Dorsolateral prefrontal cortex (tissue), 120 donors: ENCODE measurements at regions of chr1 and their contacts with region 1.

Region 1: GRCh38 chr1:109532365-109533136 is 7.1 kb upstream of the GPR61 start:
- DNase-seq: peak; percentile 80 to 90 (median 88)
- H3K4me3 ChIP-seq: peak overlapping the region in 52 of 59 donors; percentile 4 to 59 (median 34)
- H3K27ac ChIP-seq: peak overlapping the region in 56 of 59 donors; percentile 34 to 92 (median 84)
- H3K27me3 ChIP-seq: no peaks in the 10 kb centered on the region
- CTCF ChIP-seq: peak; percentile 81 to 99 (median 94)

Region 2: GRCh38 chr1:109282952-109283747 is 249.4 kb before region 1 on chr1 and contains the start of gene PSRC1:
- intact Hi-C with region 1: loop called in 1 of 2 experiments (anchors 5 kb)
- DNase-seq: peak; percentile 98 to 99 (median 99)
- H3K4me3 ChIP-seq: peak within 1 kb of the TSS; percentile 61 to 99 (median 84)
- H3K27ac ChIP-seq: peak within 1 kb of the TSS; percentile 46 to 100 (median 96)
- H3K27me3 ChIP-seq: no peaks in the 10 kb centered on the region
- CTCF ChIP-seq: peak in 53 of 56 donors; percentile 22 to 72 (median 54)
- total RNA-seq, gene PSRC1: 52.9 to 176 (median 79.2) TPM

Region 3: GRCh38 chr1:109412551-109412950 is 120.0 kb before region 1 on chr1:
- intact Hi-C with region 1: loop called in 1 of 2 experiments (anchors 5 kb)
- DNase-seq: no peak
- H3K4me3 ChIP-seq: no peak overlapping the region
- H3K27ac ChIP-seq: peak overlapping the region in 3 of 59 donors; percentile 8 to 38 (median 15)
- H3K27me3 ChIP-seq: no peaks in the 10 kb centered on the region
- CTCF ChIP-seq: no peak

Region 4: GRCh38 chr1:109426278-109427170 is 106.0 kb before region 1 on chr1 and contains the start of gene PSMA5:
- intact Hi-C with region 1: loop called (anchors 5 kb)
- DNase-seq: peak; percentile 91 to 98 (median 97)
- H3K4me3 ChIP-seq: peak within 1 kb of the TSS; percentile 70 to 99 (median 94)
- H3K27ac ChIP-seq: peak within 1 kb of the TSS in 58 of 59 donors; percentile 2 to 92 (median 82)
- H3K27me3 ChIP-seq: no peaks in the 10 kb centered on the region
- CTCF ChIP-seq: peak in 20 of 56 donors; percentile 4 to 48 (median 27)
- total RNA-seq, gene PSMA5: 25.5 to 74.2 (median 56.7) TPM

Region 5: GRCh38 chr1:109483672-109484518 is 48.7 kb before region 1 on chr1 and contains the start of gene ATXN7L2:
- intact Hi-C with region 1: no loop called
- DNase-seq: peak; percentile 76 to 93 (median 88)
- H3K4me3 ChIP-seq: peak within 1 kb of the TSS; percentile 67 to 96 (median 80)
- H3K27ac ChIP-seq: peak within 1 kb of the TSS; percentile 86 to 100 (median 99)
- H3K27me3 ChIP-seq: no peaks in the 10 kb centered on the region
- CTCF ChIP-seq: peak in 25 of 56 donors; percentile 6 to 50 (median 23)
- total RNA-seq, gene ATXN7L2: 6.6 to 31.7 (median 13.9) TPM

Region 6: GRCh38 chr1:109493805-109494539 is 38.6 kb before region 1 on chr1 and contains the start of gene CYB561D1:
- intact Hi-C with region 1: loop called (anchors 1 to 2 kb)
- DNase-seq: peak; percentile 70 to 91 (median 84)
- H3K4me3 ChIP-seq: peak within 1 kb of the TSS; percentile 50 to 99 (median 88)
- H3K27ac ChIP-seq: peak within 1 kb of the TSS in 58 of 59 donors; percentile 15 to 95 (median 84)
- H3K27me3 ChIP-seq: no peaks in the 10 kb centered on the region
- CTCF ChIP-seq: peak; percentile 74 to 99 (median 93)
- total RNA-seq, gene CYB561D1: 9.4 to 21.7 (median 14.9) TPM

Region 7: GRCh38 chr1:109556563-109556962 is 24.0 kb after region 1 on chr1:
- intact Hi-C with region 1: no loop called
- DNase-seq: no peak
- H3K4me3 ChIP-seq: no peak overlapping the region
- H3K27ac ChIP-seq: no peak overlapping the region
- H3K27me3 ChIP-seq: no peaks in the 10 kb centered on the region
- CTCF ChIP-seq: no peak